MCF 10A (cell line): ENCODE measurements at regions of chr11 and their contacts with region 1.

Region 1: DNA sequence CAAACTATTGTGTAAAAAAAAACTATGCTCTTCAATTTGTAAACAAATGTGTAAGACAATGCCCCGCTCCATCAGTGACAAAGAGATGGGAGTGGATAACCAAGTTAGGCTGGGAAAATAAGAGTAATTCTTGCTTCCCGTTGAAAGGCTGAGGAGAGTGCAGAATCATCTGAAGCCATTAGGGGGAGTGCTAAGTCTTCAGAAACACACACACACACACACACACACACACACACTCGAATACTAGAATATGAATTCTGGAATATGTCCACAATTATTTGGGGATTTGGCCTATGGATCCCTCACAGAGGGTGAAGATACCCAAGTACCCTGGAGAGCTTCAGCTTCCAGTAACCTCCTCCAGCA is 27.8 kb upstream of the ROBO3 start:
- DNase-seq: peak; percentile 80
- H3K4me3 Mint-ChIP-seq: no peak overlapping the region
- H3K27ac Mint-ChIP-seq: no peak overlapping the region
- H3K4me1 Mint-ChIP-seq: peaks cover 4% of the 10 kb centered on the region
- H3K27me3 Mint-ChIP-seq: peaks cover 27% of the 10 kb centered on the region
- CTCF ChIP-seq: peak; percentile 26

Region 2: DNA sequence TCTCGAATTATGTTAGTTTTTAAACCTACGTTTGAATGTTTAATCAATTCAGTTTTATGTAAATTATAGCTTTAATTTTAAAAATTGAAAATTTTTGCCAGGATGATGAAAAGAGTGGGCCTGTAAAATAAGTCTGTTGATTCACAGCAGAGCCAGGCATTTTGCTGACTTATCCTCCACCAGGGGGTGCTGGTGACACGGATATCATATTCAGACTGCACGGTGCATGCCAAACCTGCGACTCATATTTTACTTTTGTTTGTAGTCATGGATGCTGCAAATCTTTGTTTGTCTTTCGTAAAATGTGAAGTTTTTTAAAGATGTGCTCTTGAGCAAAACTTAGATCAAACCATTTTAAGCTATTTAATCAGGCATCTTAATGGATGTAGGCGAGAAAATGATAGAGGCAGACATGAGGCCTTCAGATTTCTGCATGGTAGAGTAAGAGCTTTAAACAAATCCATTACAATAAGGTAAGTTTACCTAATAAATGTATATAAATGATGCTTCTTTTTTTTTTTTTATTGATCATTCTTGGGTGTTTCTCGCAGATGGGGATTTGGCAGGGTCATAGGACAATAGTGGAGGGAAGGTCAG is 435.1 kb before region 1 on chr11:
- CTCF ChIA-PET with region 1: no interaction called
- POLR2A ChIA-PET with region 1: no interaction called
- intact Hi-C with region 1: loop called (anchors 10 kb)
- DNase-seq: peak; percentile 90
- H3K4me3 Mint-ChIP-seq: no peak overlapping the region
- H3K27ac Mint-ChIP-seq: no peak overlapping the region
- H3K4me1 Mint-ChIP-seq: no peaks in the 10 kb centered on the region
- H3K27me3 Mint-ChIP-seq: peaks cover 33% of the 10 kb centered on the region
- CTCF ChIP-seq: peak; percentile 69

Region 3: DNA sequence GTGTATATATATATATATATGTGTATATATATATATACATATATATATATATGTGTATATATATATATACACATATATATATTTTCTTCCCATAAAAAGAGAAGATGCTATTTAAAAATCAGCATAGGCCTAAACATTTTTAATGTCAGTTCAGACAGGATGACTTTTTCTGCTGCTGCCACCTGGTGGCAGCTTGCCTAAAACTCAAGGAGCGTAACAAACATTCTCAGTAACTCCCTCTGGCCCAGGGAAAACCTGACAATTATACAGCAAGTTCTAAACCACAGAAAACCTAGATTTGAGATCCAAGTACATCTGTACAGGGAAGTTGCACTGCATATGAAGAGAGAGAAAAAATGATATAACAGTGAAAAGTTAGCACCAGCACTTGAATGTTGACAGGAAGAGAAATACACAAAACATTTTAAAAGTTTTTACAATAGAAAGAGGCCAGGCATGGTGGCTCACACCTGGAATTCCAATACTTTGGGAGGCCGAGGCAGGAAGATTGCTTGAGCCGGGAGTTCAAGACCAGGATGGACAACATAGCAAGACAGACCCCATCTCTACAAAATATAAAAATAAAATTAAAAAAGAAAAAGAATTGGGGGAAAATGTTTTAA is 251.1 kb before region 1 on chr11:
- CTCF ChIA-PET with region 1: no interaction called
- POLR2A ChIA-PET with region 1: no interaction called
- intact Hi-C with region 1: no loop called
- DNase-seq: peak; percentile 74
- H3K4me3 Mint-ChIP-seq: no peak overlapping the region
- H3K27ac Mint-ChIP-seq: no peak overlapping the region
- H3K4me1 Mint-ChIP-seq: no peaks in the 10 kb centered on the region
- H3K27me3 Mint-ChIP-seq: peaks cover 87% of the 10 kb centered on the region
- CTCF ChIP-seq: peak; percentile 52

Region 4: GRCh38 chr11:124812876-124813275 is 24.6 kb before region 1 on chr11:
- CTCF ChIA-PET with region 1: interaction called, 201 read pairs
- POLR2A ChIA-PET with region 1: interaction called, 6 read pairs
- intact Hi-C with region 1: no loop called
- DNase-seq: no peak
- H3K4me3 Mint-ChIP-seq: no peak overlapping the region
- H3K27ac Mint-ChIP-seq: no peak overlapping the region
- H3K4me1 Mint-ChIP-seq: peaks cover 5% of the 10 kb centered on the region
- H3K27me3 Mint-ChIP-seq: peaks cover 33% of the 10 kb centered on the region
- CTCF ChIP-seq: no peak

Region 5: GRCh38 chr11:124865921-124866583 is 28.6 kb after region 1 on chr11:
- CTCF ChIA-PET with region 1: interaction called, 5 read pairs
- POLR2A ChIA-PET with region 1: no interaction called
- intact Hi-C with region 1: loop called (anchors 2 kb)
- DNase-seq: peak; percentile 13
- H3K4me3 Mint-ChIP-seq: peak overlapping the region; percentile 47
- H3K27ac Mint-ChIP-seq: no peak overlapping the region
- H3K4me1 Mint-ChIP-seq: no peaks in the 10 kb centered on the region
- H3K27me3 Mint-ChIP-seq: peaks cover 88% of the 10 kb centered on the region
- CTCF ChIP-seq: peak; percentile 80

Region 6: GRCh38 chr11:124900464-124900863 is 63.0 kb after region 1 on chr11:
- CTCF ChIA-PET with region 1: interaction called, 7 read pairs
- POLR2A ChIA-PET with region 1: no interaction called
- intact Hi-C with region 1: loop called (anchors 2 kb)
- DNase-seq: peak; percentile 89
- H3K4me3 Mint-ChIP-seq: no peak overlapping the region
- H3K27ac Mint-ChIP-seq: peak overlapping the region; percentile 92
- H3K4me1 Mint-ChIP-seq: peaks cover 59% of the 10 kb centered on the region
- H3K27me3 Mint-ChIP-seq: no peaks in the 10 kb centered on the region
- CTCF ChIP-seq: no peak

Region 7: GRCh38 chr11:125750629-125751028 is 913.2 kb after region 1 on chr11:
- CTCF ChIA-PET with region 1: no interaction called
- POLR2A ChIA-PET with region 1: no interaction called
- intact Hi-C with region 1: no loop called
- DNase-seq: no peak
- H3K4me3 Mint-ChIP-seq: no peak overlapping the region
- H3K27ac Mint-ChIP-seq: no peak overlapping the region
- H3K4me1 Mint-ChIP-seq: no peaks in the 10 kb centered on the region
- H3K27me3 Mint-ChIP-seq: peaks cover 37% of the 10 kb centered on the region
- CTCF ChIP-seq: no peak